Heart right ventricle (tissue), 16 donors: ENCODE measurements at regions of chr7 and their contacts with region 1.

Region 1: DNA sequence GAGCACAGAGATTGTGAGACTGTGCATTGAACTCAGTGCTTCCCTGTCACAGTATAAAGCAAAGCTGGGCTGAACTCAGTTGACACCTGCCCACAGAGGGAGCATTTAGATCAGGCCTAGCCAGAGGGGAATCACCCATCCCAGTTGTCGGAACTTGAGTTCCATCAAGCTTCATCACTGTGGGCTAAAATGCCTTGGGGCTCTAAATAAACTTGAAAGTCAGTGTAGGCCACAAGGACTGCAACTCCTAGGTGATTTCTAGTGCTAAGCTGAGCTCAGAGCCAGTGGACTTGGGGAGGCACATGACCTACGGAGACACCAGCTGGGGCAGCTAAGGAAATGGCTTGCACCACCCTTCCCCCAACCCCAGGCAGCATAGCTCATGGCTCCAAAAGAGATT is 7.6 kb upstream of the ABCB4 start:
- DNase-seq: no peak
- ATAC-seq: no peak
- H3K4me3 ChIP-seq: no peak overlapping the region
- H3K27ac ChIP-seq: no peak overlapping the region
- H3K4me1 ChIP-seq: no peaks in the 10 kb centered on the region
- H3K27me3 ChIP-seq: no peaks in the 10 kb centered on the region
- CTCF ChIP-seq: no peak

Region 2: DNA sequence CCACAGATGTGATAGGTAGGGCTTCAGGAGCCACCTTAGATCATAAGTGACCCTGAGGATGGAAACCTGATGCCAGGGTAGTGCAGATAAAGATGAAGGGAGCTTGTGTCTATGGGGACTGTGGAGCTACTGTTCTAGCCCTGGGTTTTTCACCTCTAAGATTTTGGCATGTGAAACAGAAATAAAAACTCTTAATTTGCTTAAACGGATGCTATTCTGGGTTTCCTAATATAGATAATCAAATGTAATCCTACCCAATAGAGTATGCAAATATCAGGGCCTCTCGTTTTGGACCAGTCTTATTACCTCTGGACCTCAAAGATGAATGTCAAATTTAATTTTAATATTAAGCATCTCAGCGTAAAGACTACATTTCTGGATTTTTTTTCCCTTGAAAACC is 57.0 kb before region 1 on chr7:
- intact Hi-C with region 1: no loop called
- DNase-seq: no peak
- ATAC-seq: no peak
- H3K4me3 ChIP-seq: no peak overlapping the region
- H3K27ac ChIP-seq: no peak overlapping the region
- H3K4me1 ChIP-seq: no peaks in the 10 kb centered on the region
- H3K27me3 ChIP-seq: no peaks in the 10 kb centered on the region
- CTCF ChIP-seq: no peak

Region 3: DNA sequence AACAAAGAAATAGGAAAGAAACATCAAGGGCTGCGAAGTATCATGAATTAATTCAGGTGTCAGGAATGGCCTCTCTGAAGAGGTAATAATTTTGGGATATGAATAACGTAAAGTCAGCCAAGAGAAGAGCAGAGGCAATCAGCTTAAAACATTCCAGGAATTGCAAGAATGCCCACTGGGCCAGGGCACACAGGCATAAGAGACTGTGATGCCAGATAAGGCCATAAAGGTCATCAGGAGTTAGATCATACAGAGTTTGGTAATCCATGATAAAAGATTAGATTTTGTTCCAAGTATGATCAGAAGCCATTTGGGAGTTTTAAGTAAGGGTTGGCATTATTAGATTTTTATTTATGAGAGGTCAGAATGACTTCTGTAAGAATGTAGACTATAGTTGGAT is 45.6 kb after region 1 on chr7:
- intact Hi-C with region 1: loop called in 1 of 10 experiments (anchors 2 kb)
- DNase-seq: no peak
- ATAC-seq: no peak
- H3K4me3 ChIP-seq: no peak overlapping the region
- H3K27ac ChIP-seq: no peak overlapping the region
- H3K4me1 ChIP-seq: no peaks in the 10 kb centered on the region
- H3K27me3 ChIP-seq: no peaks in the 10 kb centered on the region
- CTCF ChIP-seq: no peak